Activated CD8-positive, alpha-beta T cell treated with anti-CD3 and anti-CD28 coated beads, Interleukin-2, amount 10 ng/mL, durations not matched to agents 7 days and 5 days (primary cell): ENCODE measurements at regions of chr10 and their contacts with region 1.

Region 1: GRCh38 chr10:25875556-25876165 is 58.4 kb upstream of the MYO3A start:
- DNase-seq: peak; percentile 75
- ATAC-seq: peak; percentile 68
- H3K4me3 Mint-ChIP-seq: no peak overlapping the region
- H3K27ac Mint-ChIP-seq: no peak overlapping the region
- H3K4me1 Mint-ChIP-seq: no peaks in the 10 kb centered on the region
- H3K27me3 Mint-ChIP-seq: peaks cover 2% of the 10 kb centered on the region

Region 2: DNA sequence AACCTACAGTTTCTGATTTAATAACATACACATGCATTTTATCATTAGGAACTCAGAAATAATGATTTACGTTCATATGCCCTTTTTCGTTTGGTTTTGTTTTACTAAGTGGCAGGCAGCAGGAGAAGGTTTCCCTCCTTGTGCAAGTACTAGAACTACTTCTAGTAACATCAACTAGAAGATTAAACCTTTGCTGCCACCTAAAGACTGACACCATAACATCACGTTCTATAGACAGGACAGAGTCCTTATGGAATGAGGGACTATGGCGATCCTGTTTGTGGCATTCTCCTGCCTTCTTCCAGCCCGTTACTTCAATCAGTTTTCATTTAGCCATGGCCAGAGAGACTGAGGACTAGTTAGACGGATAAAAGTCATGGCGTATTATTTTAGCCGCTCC is 394.1 kb after region 1 on chr10:
- CTCF ChIA-PET with region 1: interaction called, 11 read pairs
- POLR2A ChIA-PET with region 1: no interaction called
- DNase-seq: no peak
- ATAC-seq: no peak
- H3K4me3 Mint-ChIP-seq: no peak overlapping the region
- H3K27ac Mint-ChIP-seq: no peak overlapping the region
- H3K4me1 Mint-ChIP-seq: no peaks in the 10 kb centered on the region
- H3K27me3 Mint-ChIP-seq: peaks cover 9% of the 10 kb centered on the region